ENCODE measurements at regions of chr9 and their contacts with region 1.

Region 1: DNA sequence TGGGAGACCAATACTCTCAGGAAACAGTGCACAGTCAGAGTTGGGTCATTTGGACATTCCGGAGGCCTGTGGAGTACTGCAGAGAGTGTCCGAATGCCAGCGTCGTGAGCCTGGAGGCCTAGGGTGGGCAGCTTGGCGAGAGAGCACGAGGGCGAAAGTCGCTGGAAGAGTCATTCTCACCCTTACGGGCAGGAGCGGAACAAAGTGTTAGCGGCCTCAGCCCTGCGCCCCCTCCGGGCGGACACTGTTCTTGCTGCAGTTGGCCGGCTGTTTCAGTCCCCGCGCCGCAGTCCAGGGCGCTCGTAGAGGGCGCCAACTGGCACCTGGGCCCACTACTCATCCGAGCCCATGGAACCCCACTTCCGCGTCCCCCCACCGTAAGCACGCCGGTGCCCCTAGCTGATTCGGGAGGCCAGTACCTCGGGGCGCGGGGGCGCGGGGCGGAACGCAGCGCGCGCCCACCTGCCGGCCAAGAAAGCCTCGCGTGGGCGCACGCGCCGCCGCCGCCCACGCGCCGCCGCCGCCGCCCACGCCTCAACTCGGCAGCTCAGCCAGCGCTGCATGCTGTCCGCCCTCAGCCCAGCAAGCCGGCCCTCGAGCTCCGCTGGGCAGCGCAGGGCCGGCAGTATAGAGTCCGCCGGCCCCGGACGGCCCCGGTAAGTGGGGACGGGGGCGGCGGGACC is 99.7 kb upstream of the CCL21 start:
- DNase-seq: no peak
- ATAC-seq: no peak
- H3K4me3 ChIP-seq: no peak overlapping the region
- H3K27ac ChIP-seq: no peak overlapping the region
- H3K4me1 ChIP-seq: no peaks in the 10 kb centered on the region
- H3K27me3 ChIP-seq: peaks cover 17% of the 10 kb centered on the region; the same call in 1 of the 2 replicates
- CTCF ChIP-seq: no peak
- POLR2A ChIP-seq: no peak
- RAD21 ChIP-seq: no peak

Region 2: GRCh38 chr9:34675048-34675714 is 134.5 kb before region 1 on chr9:
- CTCF ChIA-PET with region 1: no interaction called
- POLR2A ChIA-PET with region 1: no interaction called
- RAD21 ChIA-PET with region 1: no interaction called
- intact Hi-C with region 1: no loop called
- DNase-seq: peak; percentile 60
- ATAC-seq: peak; percentile 99
- H3K4me3 ChIP-seq: no peak overlapping the region
- H3K27ac ChIP-seq: no peak overlapping the region
- H3K4me1 ChIP-seq: no peaks in the 10 kb centered on the region
- H3K27me3 ChIP-seq: no peaks in the 10 kb centered on the region
- CTCF ChIP-seq: peak; percentile 93 to 99 (median 96)
- POLR2A ChIP-seq: no peak
- RAD21 ChIP-seq: peak; percentile 83

Region 3: GRCh38 chr9:34869390-34869789 is 59.7 kb after region 1 on chr9:
- CTCF ChIA-PET with region 1: no interaction called
- POLR2A ChIA-PET with region 1: no interaction called
- RAD21 ChIA-PET with region 1: no interaction called
- intact Hi-C with region 1: loop called (anchors 10 kb)
- DNase-seq: peak; percentile 7
- ATAC-seq: peak; percentile 52; the same call in 1 of the 2 replicates
- H3K4me3 ChIP-seq: no peak overlapping the region
- H3K27ac ChIP-seq: no peak overlapping the region
- H3K4me1 ChIP-seq: no peaks in the 10 kb centered on the region
- H3K27me3 ChIP-seq: peaks cover 14% of the 10 kb centered on the region; the same call in 1 of the 2 replicates
- CTCF ChIP-seq: peak; percentile 51 to 62 (median 55)
- POLR2A ChIP-seq: no peak
- RAD21 ChIP-seq: peak; percentile 61

Region 4: GRCh38 chr9:35436933-35437332 is 627.3 kb after region 1 on chr9:
- CTCF ChIA-PET with region 1: no interaction called
- POLR2A ChIA-PET with region 1: no interaction called
- RAD21 ChIA-PET with region 1: no interaction called
- intact Hi-C with region 1: no loop called
- DNase-seq: no peak
- ATAC-seq: no peak
- H3K4me3 ChIP-seq: no peak overlapping the region
- H3K27ac ChIP-seq: no peak overlapping the region
- H3K4me1 ChIP-seq: no peaks in the 10 kb centered on the region
- H3K27me3 ChIP-seq: no peaks in the 10 kb centered on the region
- CTCF ChIP-seq: no peak
- POLR2A ChIP-seq: no peak
- RAD21 ChIP-seq: no peak

Region 5: DNA sequence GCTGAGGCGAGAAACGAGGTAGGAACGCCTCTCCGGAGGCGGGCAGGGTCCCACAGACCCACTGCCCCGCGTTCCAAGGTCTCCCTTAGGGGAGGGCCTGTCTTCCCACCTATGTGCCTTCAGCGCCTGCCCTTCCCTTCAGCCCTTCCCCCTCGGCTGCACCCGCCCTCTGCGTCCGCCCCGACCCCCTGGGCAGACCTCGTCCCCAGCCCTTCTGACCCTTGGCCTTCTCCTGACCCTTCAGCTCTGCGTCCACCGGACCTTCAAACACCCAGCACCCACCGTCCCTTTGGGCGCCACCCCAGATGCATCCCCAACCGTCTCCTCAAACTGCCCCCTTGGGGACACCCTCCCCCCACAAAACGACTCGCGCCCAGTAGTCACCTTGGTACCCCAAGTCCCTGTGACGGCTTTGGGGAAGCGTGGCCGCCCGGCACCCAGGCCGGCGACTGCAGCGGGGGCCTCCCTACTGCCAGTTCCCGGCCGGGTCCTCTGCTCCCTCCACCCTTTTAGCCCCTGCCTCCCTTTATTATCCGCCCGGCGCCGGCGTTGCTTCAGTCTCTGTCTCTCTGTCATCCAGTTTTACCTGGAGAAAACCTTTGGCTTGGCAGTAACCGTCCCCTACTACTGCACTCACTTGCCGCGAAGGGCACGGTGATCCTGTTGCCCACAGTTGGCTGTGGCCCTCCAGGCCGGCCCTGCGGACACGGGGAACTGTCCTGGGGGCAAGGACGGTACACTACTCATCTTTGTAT is 680.7 kb after region 1 on chr9:
- CTCF ChIA-PET with region 1: no interaction called
- POLR2A ChIA-PET with region 1: no interaction called
- RAD21 ChIA-PET with region 1: no interaction called
- intact Hi-C with region 1: no loop called
- DNase-seq: no peak
- ATAC-seq: peak; percentile 58
- H3K4me3 ChIP-seq: peak overlapping the region; percentile 60 to 68
- H3K27ac ChIP-seq: peak overlapping the region; percentile 70
- H3K4me1 ChIP-seq: peaks cover 23 to 38% of the 10 kb centered on the region in 2 experiments
- H3K27me3 ChIP-seq: no peaks in the 10 kb centered on the region
- CTCF ChIP-seq: peak in 1 of 3 experiments; percentile 23; a peak in 1 of 6 replicates
- POLR2A ChIP-seq: no peak
- RAD21 ChIP-seq: no peak

Measured in HCT116 (cell line).